ENCODE measurements at regions of chr4 and their contacts with region 1.

Region 1: GRCh38 chr4:123776254-123776653 is 379.7 kb downstream of the SPRY1 start:
- DNase-seq: no peak
- H3K4me3 Mint-ChIP-seq: no peak overlapping the region
- H3K27ac Mint-ChIP-seq: no peak overlapping the region
- H3K4me1 Mint-ChIP-seq: no peaks in the 10 kb centered on the region
- H3K27me3 Mint-ChIP-seq: peaks cover 6% of the 10 kb centered on the region

Region 2: GRCh38 chr4:123640271-123640670 is 136.0 kb before region 1 on chr4:
- intact Hi-C with region 1: no loop called
- DNase-seq: no peak
- H3K4me3 Mint-ChIP-seq: no peak overlapping the region
- H3K27ac Mint-ChIP-seq: peak overlapping the region; percentile 65
- H3K4me1 Mint-ChIP-seq: peaks cover 6% of the 10 kb centered on the region
- H3K27me3 Mint-ChIP-seq: peaks cover 9% of the 10 kb centered on the region

Region 3: GRCh38 chr4:124035364-124036041 is 259.2 kb after region 1 on chr4:
- intact Hi-C with region 1: no loop called
- DNase-seq: no peak
- H3K4me3 Mint-ChIP-seq: no peak overlapping the region
- H3K27ac Mint-ChIP-seq: no peak overlapping the region
- H3K4me1 Mint-ChIP-seq: no peaks in the 10 kb centered on the region
- H3K27me3 Mint-ChIP-seq: no peaks in the 10 kb centered on the region

Region 4: DNA sequence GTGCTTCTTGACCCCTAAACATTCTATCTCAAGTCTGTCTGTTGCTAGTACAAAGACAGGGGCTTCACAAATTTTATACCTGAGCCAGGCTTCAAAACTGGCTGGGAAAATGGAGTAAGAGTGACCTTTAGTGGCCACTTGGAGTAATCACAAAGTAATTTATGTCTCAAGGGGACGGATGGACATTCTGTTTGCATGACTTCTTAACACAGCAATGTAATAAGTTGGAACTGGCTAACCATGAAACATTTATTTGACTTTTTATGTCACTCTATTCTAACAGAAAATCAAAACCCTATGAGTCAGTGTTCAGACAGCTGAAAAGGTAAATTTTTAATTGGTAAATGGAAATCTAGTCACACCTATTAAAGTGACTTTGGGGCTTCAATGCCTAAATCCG is 335.7 kb after region 1 on chr4:
- intact Hi-C with region 1: loop called (anchors 2 kb)
- DNase-seq: no peak
- H3K4me3 Mint-ChIP-seq: no peak overlapping the region
- H3K27ac Mint-ChIP-seq: no peak overlapping the region
- H3K4me1 Mint-ChIP-seq: no peaks in the 10 kb centered on the region
- H3K27me3 Mint-ChIP-seq: no peaks in the 10 kb centered on the region

Measured in activated T-helper 2 cell treated with anti-CD3 and anti-CD28 coated beads, Interferon-gamma antibody, Interleukin-2, Interleukin-4, amounts not matched to agents 10 μg/mL and 5 μg/mL and 100 μg/mL, durations not matched to agents 14 hours and 24 hours and 36 hours (primary cell).